Posterior cingulate gyrus (tissue), 11 donors: ENCODE measurements at regions of chr20 and their contacts with region 1.

Region 1: GRCh38 chr20:59751056-59751688 is 146.8 kb downstream of the PHACTR3 start:
- DNase-seq: peak; percentile 79 to 98 (median 89)

Region 2: GRCh38 chr20:59571551-59572314 is 179.4 kb before region 1 on chr20:
- intact Hi-C with region 1: loop called (anchors 1 kb)
- DNase-seq: peak; percentile 46 to 95 (median 76)

Region 3: GRCh38 chr20:59598625-59599310 is 152.4 kb before region 1 on chr20:
- intact Hi-C with region 1: loop called (anchors 1 kb)
- DNase-seq: peak in 8 of 10 donors; percentile 66 to 95 (median 78)